Activated CD4-positive, alpha-beta T cell treated with anti-CD3 and anti-CD28 coated beads for 36 hours (primary cell): ENCODE measurements at regions of chr17 and their contacts with region 1.

Region 1: DNA sequence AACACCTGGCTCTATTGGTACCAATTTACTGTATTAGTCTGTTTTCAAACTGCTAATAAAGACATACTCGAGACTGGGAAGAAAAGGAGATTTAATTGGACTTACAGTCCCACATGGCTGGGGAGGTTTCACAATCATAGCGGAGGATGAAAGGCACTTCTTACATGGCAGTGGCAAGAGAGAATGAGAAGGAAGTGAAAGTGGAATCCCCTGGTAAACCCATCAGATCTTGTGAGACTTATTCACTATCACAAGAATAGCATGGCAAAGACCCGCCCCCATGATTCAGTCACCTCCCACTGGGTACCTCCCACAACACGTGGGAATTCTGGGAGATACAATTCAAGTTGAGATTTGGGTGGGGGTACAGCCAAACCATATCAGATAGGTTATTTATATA is 22.6 kb upstream of the GOSR1 start:
- DNase-seq: no peak
- ATAC-seq: no peak
- H3K4me3 Mint-ChIP-seq: no peak overlapping the region
- H3K27ac Mint-ChIP-seq: no peak overlapping the region
- H3K4me1 Mint-ChIP-seq: no peaks in the 10 kb centered on the region
- H3K27me3 Mint-ChIP-seq: no peaks in the 10 kb centered on the region

Region 2: GRCh38 chr17:30429155-30429554 is 25.5 kb before region 1 on chr17:
- CTCF ChIA-PET with region 1: no interaction called
- POLR2A ChIA-PET with region 1: no interaction called
- intact Hi-C with region 1: loop called in 1 of 2 experiments (anchors 2 kb)
- DNase-seq: no peak
- ATAC-seq: no peak
- H3K4me3 Mint-ChIP-seq: no peak overlapping the region
- H3K27ac Mint-ChIP-seq: no peak overlapping the region
- H3K4me1 Mint-ChIP-seq: peaks cover 2% of the 10 kb centered on the region
- H3K27me3 Mint-ChIP-seq: no peaks in the 10 kb centered on the region

Region 3: DNA sequence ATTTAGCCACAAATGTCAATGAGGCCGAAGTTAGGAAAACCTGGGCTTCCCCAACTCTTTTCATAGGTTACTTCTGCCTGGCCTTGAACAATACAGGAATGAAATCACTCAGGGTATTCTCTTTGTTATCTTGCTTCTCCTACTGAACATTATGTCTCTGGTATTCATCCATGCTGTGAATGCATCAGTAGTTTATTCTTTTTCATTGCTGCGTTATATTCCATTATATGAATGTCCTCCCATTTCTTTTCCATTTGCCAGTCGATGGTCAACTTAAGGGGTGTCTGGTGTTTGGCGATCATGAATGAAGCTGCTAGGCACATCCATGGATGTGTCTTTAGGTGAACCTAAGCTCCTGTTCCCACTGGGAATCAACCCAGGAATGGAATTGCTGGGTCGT is 241.6 kb after region 1 on chr17:
- CTCF ChIA-PET with region 1: no interaction called
- POLR2A ChIA-PET with region 1: no interaction called
- intact Hi-C with region 1: no loop called
- DNase-seq: no peak
- ATAC-seq: no peak
- H3K4me3 Mint-ChIP-seq: no peak overlapping the region
- H3K27ac Mint-ChIP-seq: no peak overlapping the region
- H3K4me1 Mint-ChIP-seq: peaks cover 10% of the 10 kb centered on the region
- H3K27me3 Mint-ChIP-seq: peaks cover 8% of the 10 kb centered on the region